Activated naive CD8-positive, alpha-beta T cell treated with anti-CD3 and anti-CD28 coated beads, Interleukin-2, amount 10 ng/mL, durations not matched to agents 7 days and 5 days (primary cell): ENCODE measurements at regions of chr17 and their contacts with region 1.

Region 1: DNA sequence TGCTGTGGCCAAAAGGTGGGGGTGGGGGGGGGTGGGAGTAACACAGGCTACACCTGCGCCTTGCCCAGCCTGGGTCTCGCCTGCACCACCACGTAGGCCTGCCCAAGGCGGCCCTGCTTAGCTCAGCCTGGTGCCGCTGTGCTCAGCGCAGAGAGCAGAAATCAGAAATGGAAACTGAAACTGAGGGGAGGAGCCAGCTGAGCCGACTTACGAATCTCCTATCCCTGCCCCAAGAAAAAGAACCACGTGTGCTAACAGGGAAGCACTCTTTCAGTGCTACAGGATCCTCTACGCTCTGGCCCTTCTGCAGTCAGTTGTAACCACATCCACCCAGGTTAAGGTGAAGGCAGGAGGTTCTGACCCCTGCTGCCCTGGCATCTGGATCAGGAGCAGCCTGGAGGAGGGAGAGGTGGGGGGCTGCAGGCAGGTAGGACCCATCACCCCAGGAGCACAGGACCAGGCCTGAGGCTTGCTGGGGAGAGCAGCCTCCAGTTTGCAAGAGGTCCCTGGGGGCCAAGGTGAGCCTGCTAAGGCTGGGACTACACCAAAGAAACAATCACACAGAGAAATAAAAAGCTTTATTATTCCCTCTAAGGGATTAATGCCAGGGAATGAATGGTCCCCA is at the start of gene DHX58:
- DNase-seq: peak; percentile 75
- ATAC-seq: peak; percentile 81
- H3K4me3 Mint-ChIP-seq: peak within 1 kb of the TSS; percentile 88
- H3K27ac Mint-ChIP-seq: peak within 1 kb of the TSS; percentile 97
- H3K4me1 Mint-ChIP-seq: peaks cover 37% of the 10 kb centered on the region
- H3K27me3 Mint-ChIP-seq: no peaks in the 10 kb centered on the region
- total RNA-seq, gene DHX58: 68.7 to 77.6 TPM

Region 2: DNA sequence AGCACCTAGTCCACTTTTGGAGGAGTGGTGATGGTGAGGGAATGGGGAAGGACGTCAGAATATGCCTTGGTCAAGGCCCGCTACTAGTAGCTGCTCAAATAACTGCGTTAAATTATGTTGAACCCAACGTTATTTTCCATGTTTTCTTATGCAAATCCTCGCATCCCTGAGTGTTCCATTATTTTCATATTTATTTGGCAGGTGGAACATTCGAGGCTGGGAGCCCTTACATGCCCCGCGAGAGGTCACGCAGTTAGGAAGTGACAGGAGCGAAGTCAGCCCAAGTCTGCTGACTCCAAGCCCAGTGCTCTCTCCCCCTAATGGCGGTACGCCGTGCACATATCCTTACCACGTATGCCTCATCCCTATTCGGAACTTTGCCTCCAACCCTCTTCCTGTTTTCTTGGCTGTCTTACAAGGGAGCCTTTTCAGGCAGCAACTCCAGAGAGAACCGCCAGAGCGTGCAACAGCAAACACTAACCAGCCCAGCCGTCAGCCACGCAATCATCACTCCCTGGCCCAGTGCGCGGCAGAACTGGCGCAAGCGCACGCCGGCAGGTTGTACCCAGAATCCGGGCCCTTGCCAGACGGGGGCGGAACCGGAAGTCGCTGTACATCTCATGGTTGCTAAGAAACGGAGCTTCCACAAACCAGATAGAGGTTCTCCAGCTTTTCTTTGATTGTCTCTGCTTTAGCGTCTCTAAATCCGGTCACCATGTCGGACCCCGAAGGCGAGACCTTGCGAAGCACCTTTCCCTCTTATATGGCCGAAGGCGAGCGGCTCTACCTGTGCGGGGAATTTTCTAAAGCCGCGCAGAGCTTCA is 182.4 kb before region 1 on chr17 and contains the start of gene ODAD4:
- POLR2A ChIA-PET with region 1: interaction called, 10 read pairs
- DNase-seq: peak; percentile 95
- ATAC-seq: peak; percentile 99
- H3K4me3 Mint-ChIP-seq: peak within 1 kb of the TSS; percentile 95
- H3K27ac Mint-ChIP-seq: peak within 1 kb of the TSS; percentile 96
- H3K4me1 Mint-ChIP-seq: peaks cover 41% of the 10 kb centered on the region
- H3K27me3 Mint-ChIP-seq: no peaks in the 10 kb centered on the region
- total RNA-seq, gene ODAD4: 0.65 to 0.72 TPM

Region 3: GRCh38 chr17:42019509-42020404 is 92.9 kb before region 1 on chr17 and contains the start of gene NKIRAS2:
- POLR2A ChIA-PET with region 1: interaction called, 108 read pairs
- DNase-seq: peak; percentile 93
- ATAC-seq: peak; percentile 76
- H3K4me3 Mint-ChIP-seq: peak within 1 kb of the TSS; percentile 97
- H3K27ac Mint-ChIP-seq: peak within 1 kb of the TSS; percentile 87
- H3K4me1 Mint-ChIP-seq: peaks cover 42% of the 10 kb centered on the region
- H3K27me3 Mint-ChIP-seq: no peaks in the 10 kb centered on the region
- total RNA-seq, gene NKIRAS2: 19.8 to 27.2 TPM

Region 4: DNA sequence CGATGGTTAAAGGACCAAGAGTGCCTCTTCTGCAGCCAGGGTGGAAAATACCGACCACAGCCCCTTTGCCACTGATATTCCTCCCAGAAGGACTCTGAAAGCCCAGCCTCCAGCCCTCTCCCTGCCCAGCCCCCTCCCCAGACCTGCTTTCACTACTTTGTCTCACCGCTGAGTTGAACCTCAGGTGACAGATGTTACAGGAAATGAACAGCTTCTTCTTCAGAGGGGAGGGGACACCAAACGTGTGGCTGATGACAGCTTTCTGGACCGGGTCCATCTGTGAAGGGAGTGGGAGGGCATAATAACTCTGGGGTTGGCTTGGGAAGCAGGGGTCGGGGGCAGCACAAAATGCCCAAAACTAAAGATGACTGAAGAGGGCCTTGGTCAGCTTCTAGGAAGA is 78.6 kb before region 1 on chr17:
- POLR2A ChIA-PET with region 1: interaction called, 11 read pairs
- DNase-seq: no peak
- ATAC-seq: peak; percentile 67
- H3K4me3 Mint-ChIP-seq: peak overlapping the region; percentile 17
- H3K27ac Mint-ChIP-seq: no peak overlapping the region
- H3K4me1 Mint-ChIP-seq: peaks cover 7% of the 10 kb centered on the region
- H3K27me3 Mint-ChIP-seq: peaks cover 6% of the 10 kb centered on the region

Region 5: GRCh38 chr17:42072323-42073187 is 40.1 kb before region 1 on chr17:
- POLR2A ChIA-PET with region 1: interaction called, 25 read pairs
- DNase-seq: peak; percentile 58
- ATAC-seq: peak; percentile 16
- H3K4me3 Mint-ChIP-seq: peak overlapping the region; percentile 84
- H3K27ac Mint-ChIP-seq: peak overlapping the region; percentile 85
- H3K4me1 Mint-ChIP-seq: peaks cover 20% of the 10 kb centered on the region
- H3K27me3 Mint-ChIP-seq: peaks cover 8% of the 10 kb centered on the region

Region 6: GRCh38 chr17:42287926-42288802 is 175.5 kb after region 1 on chr17 and contains the start of gene STAT5A:
- POLR2A ChIA-PET with region 1: interaction called, 10 read pairs
- DNase-seq: peak; percentile 85
- ATAC-seq: peak; percentile 84
- H3K4me3 Mint-ChIP-seq: peak within 1 kb of the TSS; percentile 91
- H3K27ac Mint-ChIP-seq: peak within 1 kb of the TSS; percentile 88
- H3K4me1 Mint-ChIP-seq: peaks cover 37% of the 10 kb centered on the region
- H3K27me3 Mint-ChIP-seq: no peaks in the 10 kb centered on the region
- total RNA-seq, gene STAT5A: 125 to 131 TPM